PC-9 (cell line): ENCODE measurements at regions of chr3 and their contacts with region 1.

Region 1: GRCh38 chr3:170953229-170953628 is 44.8 kb upstream of the EIF5A2 start:
- DNase-seq: no peak
- H3K4me3 ChIP-seq: no peak overlapping the region
- H3K27ac ChIP-seq: no peak overlapping the region
- H3K4me1 ChIP-seq: no peaks in the 10 kb centered on the region
- H3K27me3 ChIP-seq: no peaks in the 10 kb centered on the region
- CTCF ChIP-seq: no peak

Region 2: GRCh38 chr3:172476347-172476746 is 1523.1 kb after region 1 on chr3:
- CTCF ChIA-PET with region 1: no interaction called
- POLR2A ChIA-PET with region 1: no interaction called
- intact Hi-C with region 1: loop called (anchors 2 kb)
- DNase-seq: no peak
- H3K4me3 ChIP-seq: peak overlapping the region; percentile 69
- H3K27ac ChIP-seq: no peak overlapping the region
- H3K4me1 ChIP-seq: 0 out of 2 replicates have a peak, but pooled peaks cover 5% of the 10 kb centered on the region
- H3K27me3 ChIP-seq: no peaks in the 10 kb centered on the region
- CTCF ChIP-seq: no peak